T-cell (primary cell): ENCODE measurements at regions of chr13 and their contacts with region 1.

Region 1: DNA sequence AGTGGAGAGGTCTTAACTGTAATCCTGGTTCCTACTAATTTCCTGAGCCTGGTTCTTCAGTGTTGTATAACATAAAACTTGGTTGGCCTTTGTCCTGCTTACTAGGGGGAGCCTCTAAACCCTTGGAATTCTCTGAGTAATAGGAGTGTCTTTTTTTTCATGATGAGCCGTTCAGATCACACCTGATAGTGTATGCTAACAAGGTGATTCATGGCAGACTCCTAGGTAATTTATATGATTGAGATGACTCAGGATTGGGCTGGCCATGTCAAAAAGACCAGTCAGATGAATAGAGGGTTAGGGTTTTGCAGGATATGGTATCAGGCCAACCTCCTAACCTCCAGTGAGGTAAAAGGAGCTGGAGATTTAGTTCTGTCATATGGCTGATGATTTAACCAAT is 135.8 kb upstream of the KLF12 start:
- DNase-seq: no peak
- ATAC-seq: no peak
- H3K4me3 ChIP-seq: no peak overlapping the region
- H3K4me3 Mint-ChIP-seq: no peak overlapping the region
- H3K27ac ChIP-seq: no peak overlapping the region
- H3K27ac Mint-ChIP-seq: peak overlapping the region in 1 of 2 donors; percentile 21
- H3K4me1 ChIP-seq: no peaks in the 10 kb centered on the region
- H3K4me1 Mint-ChIP-seq: peaks cover 20 to 42% (median 27%) of the 10 kb centered on the region in 3 donors
- H3K27me3 ChIP-seq: no peaks in the 10 kb centered on the region
- H3K27me3 Mint-ChIP-seq: no peaks in the 10 kb centered on the region

Region 2: GRCh38 chr13:72920097-72920496 is 1349.9 kb before region 1 on chr13:
- CTCF ChIA-PET with region 1: interaction called in 1 of 2 experiments, 10 read pairs
- POLR2A ChIA-PET with region 1: interaction called in 1 of 2 experiments, 3 read pairs
- DNase-seq: no peak
- ATAC-seq: no peak
- H3K4me3 ChIP-seq: no peak overlapping the region
- H3K4me3 Mint-ChIP-seq: no peak overlapping the region
- H3K27ac ChIP-seq: no peak overlapping the region
- H3K27ac Mint-ChIP-seq: no peak overlapping the region
- H3K4me1 ChIP-seq: no peaks in the 10 kb centered on the region
- H3K4me1 Mint-ChIP-seq: peaks cover 0 to 6% (median 4%) of the 10 kb centered on the region in 3 donors
- H3K27me3 ChIP-seq: no peaks in the 10 kb centered on the region
- H3K27me3 Mint-ChIP-seq: no peaks in the 10 kb centered on the region

Region 3: GRCh38 chr13:73090116-73090811 is 1179.8 kb before region 1 on chr13:
- CTCF ChIA-PET with region 1: no interaction called
- POLR2A ChIA-PET with region 1: interaction called in 1 of 2 experiments, 11 read pairs
- DNase-seq: peak in 1 of 35 experiments; percentile 12
- ATAC-seq: peak in 2 of 4 experiments; percentile 49 to 52
- H3K4me3 ChIP-seq: no peak overlapping the region
- H3K4me3 Mint-ChIP-seq: no peak overlapping the region
- H3K27ac ChIP-seq: no peak overlapping the region
- H3K27ac Mint-ChIP-seq: peak overlapping the region in 1 of 2 donors; percentile 23
- H3K4me1 ChIP-seq: peaks cover 7% of the 10 kb centered on the region in 2 experiments
- H3K4me1 Mint-ChIP-seq: peaks cover 12 to 16% (median 13%) of the 10 kb centered on the region in 3 donors
- H3K27me3 ChIP-seq: peaks cover 0 to 3% of the 10 kb centered on the region in 2 experiments
- H3K27me3 Mint-ChIP-seq: no peaks in the 10 kb centered on the region

Region 4: GRCh38 chr13:73967397-73968165 is 302.4 kb before region 1 on chr13:
- CTCF ChIA-PET with region 1: no interaction called
- POLR2A ChIA-PET with region 1: no interaction called
- DNase-seq: no peak
- ATAC-seq: no peak
- H3K4me3 ChIP-seq: no peak overlapping the region
- H3K4me3 Mint-ChIP-seq: no peak overlapping the region
- H3K27ac ChIP-seq: no peak overlapping the region
- H3K27ac Mint-ChIP-seq: no peak overlapping the region
- H3K4me1 ChIP-seq: peaks cover 0 to 6% of the 10 kb centered on the region in 2 experiments
- H3K4me1 Mint-ChIP-seq: peaks cover 56 to 79% (median 76%) of the 10 kb centered on the region in 3 donors
- H3K27me3 ChIP-seq: no peaks in the 10 kb centered on the region
- H3K27me3 Mint-ChIP-seq: no peaks in the 10 kb centered on the region